Activated CD4-positive, alpha-beta memory T cell treated with anti-CD3 and anti-CD28 coated beads, Interleukin-2, amount 10 ng/mL, durations not matched to agents 7 days and 5 days (primary cell): ENCODE measurements at regions of chr11 and their contacts with region 1.

Region 1: DNA sequence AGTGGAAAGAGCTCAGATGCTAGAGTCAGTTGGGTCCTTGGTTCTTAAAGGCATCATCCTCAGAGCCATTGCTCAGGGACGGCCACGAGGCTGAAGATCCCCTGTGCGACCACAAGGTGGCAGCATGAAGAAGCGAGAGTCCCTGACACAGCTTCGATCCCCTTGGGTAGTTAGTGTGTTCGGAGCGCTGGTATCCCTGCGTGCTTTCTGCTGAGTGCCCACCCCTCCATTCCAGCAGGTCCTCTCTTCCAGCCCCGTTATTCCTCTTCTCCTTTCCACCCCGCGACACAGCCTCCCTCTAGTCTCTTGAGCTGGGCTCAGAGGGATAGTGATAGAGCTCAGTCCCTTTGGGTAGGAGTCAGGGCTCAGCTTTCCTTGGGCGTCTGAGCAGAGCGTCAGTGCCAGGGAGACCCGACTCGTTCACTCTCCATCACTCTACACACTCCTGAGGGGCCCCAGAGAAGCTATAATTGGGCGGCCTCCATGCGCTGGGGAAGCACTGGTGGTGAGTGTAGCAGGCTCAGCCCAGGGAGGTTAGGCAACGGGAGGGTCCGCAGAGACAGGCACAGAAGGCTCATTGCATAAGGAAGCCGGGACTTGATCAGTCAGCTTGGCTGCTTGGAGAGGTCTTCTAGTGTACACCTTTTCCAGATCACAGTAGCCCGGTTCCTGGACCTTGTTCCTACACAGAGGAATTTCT is at the start of gene OR51D1:
- DNase-seq: peak; percentile 70
- H3K4me3 Mint-ChIP-seq: no peak within 1 kb of the TSS
- H3K27ac Mint-ChIP-seq: no peak within 1 kb of the TSS
- H3K4me1 Mint-ChIP-seq: no peaks in the 10 kb centered on the region
- H3K27me3 Mint-ChIP-seq: peaks cover 13% of the 10 kb centered on the region
- total RNA-seq, gene OR51D1: not detected

Region 2: GRCh38 chr11:4626207-4627099 is 10.7 kb before region 1 on chr11:
- CTCF ChIA-PET with region 1: interaction called, 18 read pairs
- POLR2A ChIA-PET with region 1: no interaction called
- DNase-seq: peak; percentile 69
- H3K4me3 Mint-ChIP-seq: no peak overlapping the region
- H3K27ac Mint-ChIP-seq: no peak overlapping the region
- H3K4me1 Mint-ChIP-seq: no peaks in the 10 kb centered on the region
- H3K27me3 Mint-ChIP-seq: peaks cover 31% of the 10 kb centered on the region

Region 3: GRCh38 chr11:4647766-4648165 is 10.7 kb after region 1 on chr11:
- CTCF ChIA-PET with region 1: interaction called, 13 read pairs
- POLR2A ChIA-PET with region 1: no interaction called
- DNase-seq: no peak
- H3K4me3 Mint-ChIP-seq: no peak overlapping the region
- H3K27ac Mint-ChIP-seq: no peak overlapping the region
- H3K4me1 Mint-ChIP-seq: no peaks in the 10 kb centered on the region
- H3K27me3 Mint-ChIP-seq: peaks cover 8% of the 10 kb centered on the region